ENCODE measurements at regions of chr9 and their contacts with region 1.

Region 1: DNA sequence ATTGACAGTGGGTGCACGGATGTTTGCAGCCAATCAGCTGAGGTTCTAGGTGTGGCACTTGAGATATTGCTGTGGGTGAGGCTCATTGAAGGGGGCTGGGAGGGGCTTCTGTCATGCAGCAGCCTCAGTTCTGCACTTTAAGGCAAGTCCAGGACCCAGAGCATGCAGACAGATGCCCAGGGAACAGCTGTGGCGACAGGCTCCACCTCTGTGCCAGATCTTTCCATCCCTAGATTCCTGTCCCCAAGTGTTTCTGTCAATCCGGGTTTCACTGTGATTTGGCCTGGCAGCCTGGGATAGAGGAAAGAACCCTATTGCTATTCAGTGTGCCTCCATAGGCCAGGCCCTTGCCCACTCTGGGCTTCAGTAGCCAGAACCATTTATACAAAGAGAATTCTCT is 20.8 kb upstream of the CERCAM start:
- DNase-seq: no peak
- H3K4me3 ChIP-seq: no peak overlapping the region
- H3K27ac ChIP-seq: no peak overlapping the region
- H3K4me1 ChIP-seq: peaks cover 15% of the 10 kb centered on the region
- H3K27me3 ChIP-seq: peaks cover 61% of the 10 kb centered on the region
- CTCF ChIP-seq: no peak

Region 2: GRCh38 chr9:128361986-128362646 is 37.7 kb before region 1 on chr9:
- intact Hi-C with region 1: loop called (anchors 5 kb)
- DNase-seq: peak; percentile 79
- H3K4me3 ChIP-seq: peak overlapping the region; percentile 68
- H3K27ac ChIP-seq: peak overlapping the region; percentile 86
- H3K4me1 ChIP-seq: peaks cover 31% of the 10 kb centered on the region
- H3K27me3 ChIP-seq: no peaks in the 10 kb centered on the region
- CTCF ChIP-seq: peak; percentile 96

Region 3: DNA sequence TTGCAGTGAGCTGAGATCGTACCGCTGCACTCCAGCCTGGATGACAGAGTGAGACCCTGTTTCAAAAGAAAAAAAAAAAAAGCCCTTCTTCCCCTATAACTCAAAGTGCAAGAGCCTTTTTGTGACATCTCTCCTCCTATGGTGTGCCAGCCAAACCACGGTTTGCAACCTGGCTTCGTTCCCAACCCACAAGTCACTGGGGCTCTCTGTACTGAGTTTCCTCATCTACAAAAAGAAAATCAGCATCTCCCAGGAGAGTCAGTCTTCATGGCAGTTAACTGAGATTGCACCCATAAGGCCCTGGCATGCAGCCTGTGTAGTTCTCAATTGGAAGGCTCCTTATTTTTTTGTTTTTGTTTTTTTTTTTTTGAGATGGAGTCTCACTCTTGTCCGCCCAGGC is 70.7 kb after region 1 on chr9:
- intact Hi-C with region 1: no loop called
- DNase-seq: no peak
- H3K4me3 ChIP-seq: no peak overlapping the region
- H3K27ac ChIP-seq: no peak overlapping the region
- H3K4me1 ChIP-seq: no peaks in the 10 kb centered on the region
- H3K27me3 ChIP-seq: no peaks in the 10 kb centered on the region
- CTCF ChIP-seq: no peak